ENCODE measurements at regions of chr7 and their contacts with region 1.

Region 1: DNA sequence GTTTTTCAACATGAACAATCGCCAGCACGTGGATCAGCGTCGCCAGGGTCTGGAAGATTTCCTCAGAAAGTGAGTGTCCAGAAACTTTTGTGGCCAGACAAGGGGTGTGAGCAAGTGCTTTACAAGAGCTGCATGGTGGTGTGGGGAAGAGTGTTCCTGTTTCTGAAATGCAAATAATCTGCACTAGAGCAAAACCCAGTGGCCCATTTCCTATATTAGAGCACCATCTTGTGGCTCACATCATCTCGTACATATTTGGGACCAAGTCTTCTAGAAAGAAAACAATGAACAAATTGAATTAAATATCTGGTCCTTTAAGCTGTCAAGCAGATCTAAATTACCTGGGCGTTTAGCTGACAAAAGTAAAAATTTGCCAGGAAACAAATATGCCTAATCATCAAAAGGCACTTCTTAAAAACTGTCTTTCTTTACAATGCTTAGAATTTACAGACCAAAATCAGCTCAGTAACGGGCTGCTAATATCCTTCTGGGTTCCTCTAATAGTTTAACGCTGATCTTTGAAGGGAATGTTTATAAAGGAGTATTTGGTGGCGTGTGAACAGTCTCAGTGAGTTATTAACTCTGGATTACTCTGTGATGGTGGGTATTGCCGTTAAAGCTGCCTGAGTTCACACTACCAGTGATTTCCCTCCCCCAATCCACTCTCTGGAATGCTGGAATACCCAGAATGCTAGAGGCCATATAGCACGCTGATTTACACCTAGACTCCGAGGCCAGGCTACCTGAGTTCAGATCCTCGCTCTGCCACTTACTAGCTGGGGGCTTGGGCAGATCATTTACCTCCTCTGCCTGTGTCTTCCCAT is 73.6 kb downstream of the SNX10 start:
- DNase-seq: peak in 3 of 5 donors; percentile 19 to 64 (median 34)
- H3K4me3 ChIP-seq: no peak overlapping the region
- H3K27ac ChIP-seq: no peak overlapping the region
- H3K4me1 ChIP-seq: no peaks in the 10 kb centered on the region
- H3K27me3 ChIP-seq: no peaks in the 10 kb centered on the region
- CTCF ChIP-seq: peak; percentile 35 to 81 (median 78)
- EP300 ChIP-seq: no peak
- POLR2A ChIP-seq: no peak

Region 2: GRCh38 chr7:26083113-26083512 is 282.2 kb before region 1 on chr7:
- intact Hi-C with region 1: loop called in 2 of 4 experiments (anchors 10 kb)
- DNase-seq: no peak
- H3K4me3 ChIP-seq: no peak overlapping the region
- H3K27ac ChIP-seq: no peak overlapping the region
- H3K4me1 ChIP-seq: no peaks in the 10 kb centered on the region
- H3K27me3 ChIP-seq: no peaks in the 10 kb centered on the region
- CTCF ChIP-seq: no peak
- EP300 ChIP-seq: no peak
- POLR2A ChIP-seq: no peak

Region 3: DNA sequence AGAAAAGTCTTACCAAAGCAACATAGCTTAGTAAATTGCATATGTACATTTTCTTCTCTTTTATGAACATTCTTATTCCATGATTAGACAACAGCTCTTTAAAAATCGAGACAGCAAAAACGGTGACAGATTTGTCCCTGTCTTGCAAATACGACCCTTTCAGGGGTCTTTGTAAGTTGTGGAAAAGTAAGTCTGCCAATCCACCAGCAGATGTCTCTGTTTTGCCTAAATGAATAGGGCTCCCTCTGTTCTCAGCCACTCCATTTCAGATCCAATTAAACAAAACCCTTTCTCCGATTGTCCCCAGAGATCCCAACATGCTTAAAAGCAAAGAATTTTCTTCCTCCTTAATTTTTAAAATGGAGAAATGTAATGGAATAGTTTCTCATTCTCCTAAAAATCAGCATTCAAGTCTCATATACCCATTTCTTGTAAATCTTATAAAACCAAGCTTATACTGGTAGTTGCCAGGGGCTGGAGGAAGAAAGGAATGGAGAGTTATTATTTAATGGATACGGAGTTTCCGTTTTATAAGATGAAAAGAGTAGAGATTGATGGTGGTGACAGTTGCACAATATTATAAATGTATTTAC is 274.3 kb before region 1 on chr7:
- intact Hi-C with region 1: loop called in 3 of 4 experiments (anchors 10 kb)
- DNase-seq: no peak
- H3K4me3 ChIP-seq: no peak overlapping the region
- H3K27ac ChIP-seq: no peak overlapping the region
- H3K4me1 ChIP-seq: no peaks in the 10 kb centered on the region
- H3K27me3 ChIP-seq: no peaks in the 10 kb centered on the region
- CTCF ChIP-seq: no peak
- EP300 ChIP-seq: no peak
- POLR2A ChIP-seq: no peak

Region 4: GRCh38 chr7:26667500-26668133 is 302.3 kb after region 1 on chr7:
- intact Hi-C with region 1: loop called in 2 of 4 experiments (anchors 10 kb)
- DNase-seq: peak in 4 of 5 donors; percentile 14 to 39 (median 28)
- H3K4me3 ChIP-seq: no peak overlapping the region
- H3K27ac ChIP-seq: no peak overlapping the region
- H3K4me1 ChIP-seq: no peaks in the 10 kb centered on the region
- H3K27me3 ChIP-seq: no peaks in the 10 kb centered on the region
- CTCF ChIP-seq: peak in 1 of 3 donors; percentile 41
- EP300 ChIP-seq: no peak
- POLR2A ChIP-seq: no peak

Region 5: GRCh38 chr7:27160546-27161213 is 795.4 kb after region 1 on chr7:
- intact Hi-C with region 1: loop called (anchors 5 to 10 kb)
- DNase-seq: peak; percentile 71 to 89 (median 87)
- H3K4me3 ChIP-seq: peak overlapping the region; percentile 43
- H3K27ac ChIP-seq: no peak overlapping the region
- H3K4me1 ChIP-seq: peaks cover 4% of the 10 kb centered on the region
- H3K27me3 ChIP-seq: peaks cover 9% of the 10 kb centered on the region
- CTCF ChIP-seq: peak; percentile 96 to 98 (median 97)
- EP300 ChIP-seq: no peak
- POLR2A ChIP-seq: no peak